PC-3 (cell line): ENCODE measurements at regions of chr5 and their contacts with region 1.

Region 1: DNA sequence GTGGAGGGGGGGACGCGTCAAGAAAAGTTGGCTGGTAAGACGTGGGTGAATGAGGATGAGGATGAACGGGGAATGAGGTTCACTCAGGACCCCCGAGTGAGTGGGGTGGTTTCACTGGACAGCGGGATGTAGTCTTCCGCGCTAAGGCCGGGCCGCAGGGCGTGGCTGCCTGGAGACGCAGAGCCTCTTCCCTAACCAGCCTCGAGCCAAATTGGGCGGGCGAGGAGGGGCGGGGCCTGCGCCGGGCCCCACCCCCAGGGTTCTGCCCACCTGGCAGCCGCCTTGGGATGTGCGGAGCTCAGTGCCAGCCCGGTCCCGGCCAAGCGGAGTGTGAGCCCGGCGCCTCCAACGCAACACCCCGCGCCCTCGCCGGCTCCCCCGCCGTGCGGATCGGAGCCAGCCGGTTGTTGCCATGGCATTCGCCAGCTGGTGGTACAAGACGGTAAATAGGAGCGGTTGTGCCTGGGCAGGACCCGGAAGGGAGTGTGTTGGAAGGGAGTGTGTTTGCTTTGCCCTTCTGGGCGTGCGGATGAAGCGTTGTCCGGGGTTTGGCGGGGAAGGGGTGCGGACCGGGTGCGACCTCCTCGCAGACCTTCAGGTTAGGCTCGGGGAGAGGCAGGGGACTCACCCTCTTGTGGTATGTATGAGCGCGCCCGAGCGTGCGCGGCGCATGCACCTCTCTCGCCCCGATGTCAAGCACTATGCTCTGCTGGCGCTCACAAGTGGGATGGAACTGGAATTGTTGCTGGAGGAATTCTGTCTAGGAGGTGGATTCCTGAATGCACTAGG is 743 bp downstream of the CAST start:
- DNase-seq: peak; percentile 90
- ATAC-seq: peak; percentile 71
- H3K4me3 ChIP-seq: peak overlapping the region; percentile 94
- H3K27ac ChIP-seq: peak overlapping the region; percentile 96
- H3K4me1 ChIP-seq: peaks cover 47% of the 10 kb centered on the region
- H3K27me3 ChIP-seq: no peaks in the 10 kb centered on the region
- CTCF ChIP-seq: no peak

Region 2: GRCh38 chr5:96209829-96210228 is 453.1 kb before region 1 on chr5:
- CTCF ChIA-PET with region 1: no interaction called
- POLR2A ChIA-PET with region 1: no interaction called
- intact Hi-C with region 1: no loop called
- DNase-seq: peak; percentile 77
- ATAC-seq: peak; percentile 65
- H3K4me3 ChIP-seq: no peak overlapping the region
- H3K27ac ChIP-seq: peak overlapping the region; percentile 31
- H3K4me1 ChIP-seq: peaks cover 9% of the 10 kb centered on the region
- H3K27me3 ChIP-seq: no peaks in the 10 kb centered on the region
- CTCF ChIP-seq: no peak

Region 3: DNA sequence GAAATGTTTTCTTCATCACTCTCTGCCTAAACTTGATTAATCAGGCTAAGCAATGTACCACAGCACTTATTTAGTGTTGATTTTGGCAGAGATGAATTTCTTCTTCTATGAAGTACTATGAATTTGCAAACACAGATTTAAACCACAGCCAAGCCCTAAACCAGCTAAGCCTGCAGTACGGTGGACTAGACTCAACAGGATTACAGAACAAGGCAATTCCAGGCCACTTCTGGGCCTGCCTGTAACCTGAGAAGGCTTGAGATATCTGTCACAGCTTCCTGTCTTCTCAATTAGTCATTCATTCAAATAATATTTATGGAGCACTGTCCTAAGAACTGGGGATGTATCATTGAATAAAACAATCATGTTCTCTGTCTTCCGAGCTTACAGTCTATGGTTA is 33.1 kb before region 1 on chr5:
- CTCF ChIA-PET with region 1: no interaction called
- POLR2A ChIA-PET with region 1: no interaction called
- intact Hi-C with region 1: loop called (anchors 1 kb)
- DNase-seq: peak; percentile 90
- ATAC-seq: peak; percentile 94
- H3K4me3 ChIP-seq: peak overlapping the region; percentile 26; the same call in 1 of the 2 replicates
- H3K27ac ChIP-seq: peak overlapping the region; percentile 96
- H3K4me1 ChIP-seq: peaks cover 44% of the 10 kb centered on the region
- H3K27me3 ChIP-seq: no peaks in the 10 kb centered on the region
- CTCF ChIP-seq: no peak

Region 4: GRCh38 chr5:96687812-96688453 is 25.0 kb after region 1 on chr5:
- CTCF ChIA-PET with region 1: interaction called, 3 read pairs
- POLR2A ChIA-PET with region 1: interaction called, 4 read pairs
- intact Hi-C with region 1: loop called (anchors 2 kb)
- DNase-seq: peak; percentile 57
- ATAC-seq: peak; percentile 84
- H3K4me3 ChIP-seq: peak overlapping the region; percentile 48
- H3K27ac ChIP-seq: 0 out of 2 replicates have a peak overlapping the region, but pooled peaks have one; percentile 1
- H3K4me1 ChIP-seq: peaks cover 5% of the 10 kb centered on the region
- H3K27me3 ChIP-seq: no peaks in the 10 kb centered on the region
- CTCF ChIP-seq: peak; percentile 71

Region 5: GRCh38 chr5:96816411-96816939 is 153.6 kb after region 1 on chr5:
- CTCF ChIA-PET with region 1: no interaction called
- POLR2A ChIA-PET with region 1: no interaction called
- intact Hi-C with region 1: no loop called
- DNase-seq: no peak
- ATAC-seq: peak; percentile 40; the same call in 1 of the 2 replicates
- H3K4me3 ChIP-seq: no peak overlapping the region
- H3K27ac ChIP-seq: no peak overlapping the region
- H3K4me1 ChIP-seq: peaks cover 6% of the 10 kb centered on the region
- H3K27me3 ChIP-seq: no peaks in the 10 kb centered on the region
- CTCF ChIP-seq: no peak